ENCODE measurements at regions of chr2 and their contacts with region 1.

Region 1: GRCh38 chr2:70258532-70258874 is 566 bp downstream of the PCYOX1 start:
- DNase-seq: no peak
- ATAC-seq: no peak
- H3K4me3 Mint-ChIP-seq: peak overlapping the region; percentile 95
- H3K27ac Mint-ChIP-seq: peak overlapping the region; percentile 92
- H3K4me1 Mint-ChIP-seq: peaks cover 28% of the 10 kb centered on the region
- H3K27me3 Mint-ChIP-seq: peaks cover 4% of the 10 kb centered on the region

Region 2: DNA sequence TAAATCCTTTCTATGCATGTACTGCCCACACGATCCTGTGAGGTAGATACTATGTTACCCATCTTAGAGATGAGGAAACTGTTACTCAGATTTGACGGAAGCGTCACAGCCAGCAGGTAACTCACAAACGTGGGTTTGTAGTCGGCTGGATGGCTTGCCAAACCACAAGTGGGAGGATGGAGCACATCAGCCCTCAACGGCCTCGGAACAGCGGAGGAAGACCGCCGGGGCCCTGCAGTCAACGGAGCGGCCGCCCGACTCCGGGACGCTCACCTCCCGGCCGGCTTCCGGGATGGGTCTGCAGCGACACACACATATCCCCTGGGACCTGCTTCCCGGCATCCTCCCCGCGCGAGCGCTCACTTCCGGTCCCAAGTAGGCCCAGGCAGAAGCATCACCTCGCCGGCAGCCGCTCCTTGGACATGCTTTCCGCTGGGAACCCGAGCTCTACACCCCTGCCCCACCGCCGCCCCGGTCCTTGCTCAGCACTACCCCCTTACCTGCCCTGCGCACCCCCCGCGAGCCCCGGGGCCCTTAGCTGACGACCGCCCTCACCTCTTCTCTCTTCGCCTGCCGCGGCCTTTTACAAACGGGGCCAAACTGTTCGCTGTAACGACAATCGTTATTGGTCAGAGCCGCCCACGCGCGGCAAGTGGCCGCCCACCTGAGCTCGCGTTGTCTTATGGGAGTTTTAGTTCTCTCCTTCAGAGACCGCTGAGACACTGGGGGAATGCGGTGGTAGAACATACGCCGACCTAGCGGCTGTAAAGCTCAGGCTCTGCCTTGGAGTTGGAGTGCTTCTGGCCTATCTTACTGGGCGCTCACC is 67.9 kb before region 1 on chr2 and contains the start of gene C2orf42:
- POLR2A ChIA-PET with region 1: interaction called, 16 read pairs
- DNase-seq: peak; percentile 93
- ATAC-seq: peak; percentile 85
- H3K4me3 Mint-ChIP-seq: peak within 1 kb of the TSS; percentile 95
- H3K27ac Mint-ChIP-seq: peak within 1 kb of the TSS; percentile 99
- H3K4me1 Mint-ChIP-seq: peaks cover 14% of the 10 kb centered on the region
- H3K27me3 Mint-ChIP-seq: peaks cover 2% of the 10 kb centered on the region
- total RNA-seq, gene C2orf42: 30.9 to 33.8 TPM

Region 3: GRCh38 chr2:70248181-70248847 is 10.2 kb before region 1 on chr2 and contains the start of gene TIA1:
- POLR2A ChIA-PET with region 1: interaction called, 20 read pairs
- DNase-seq: peak; percentile 97
- ATAC-seq: peak; percentile 99
- H3K4me3 Mint-ChIP-seq: peak within 1 kb of the TSS; percentile 99
- H3K27ac Mint-ChIP-seq: peak within 1 kb of the TSS; percentile 99
- H3K4me1 Mint-ChIP-seq: peaks cover 21% of the 10 kb centered on the region
- H3K27me3 Mint-ChIP-seq: no peaks in the 10 kb centered on the region
- total RNA-seq, gene TIA1: 160 TPM

Region 4: DNA sequence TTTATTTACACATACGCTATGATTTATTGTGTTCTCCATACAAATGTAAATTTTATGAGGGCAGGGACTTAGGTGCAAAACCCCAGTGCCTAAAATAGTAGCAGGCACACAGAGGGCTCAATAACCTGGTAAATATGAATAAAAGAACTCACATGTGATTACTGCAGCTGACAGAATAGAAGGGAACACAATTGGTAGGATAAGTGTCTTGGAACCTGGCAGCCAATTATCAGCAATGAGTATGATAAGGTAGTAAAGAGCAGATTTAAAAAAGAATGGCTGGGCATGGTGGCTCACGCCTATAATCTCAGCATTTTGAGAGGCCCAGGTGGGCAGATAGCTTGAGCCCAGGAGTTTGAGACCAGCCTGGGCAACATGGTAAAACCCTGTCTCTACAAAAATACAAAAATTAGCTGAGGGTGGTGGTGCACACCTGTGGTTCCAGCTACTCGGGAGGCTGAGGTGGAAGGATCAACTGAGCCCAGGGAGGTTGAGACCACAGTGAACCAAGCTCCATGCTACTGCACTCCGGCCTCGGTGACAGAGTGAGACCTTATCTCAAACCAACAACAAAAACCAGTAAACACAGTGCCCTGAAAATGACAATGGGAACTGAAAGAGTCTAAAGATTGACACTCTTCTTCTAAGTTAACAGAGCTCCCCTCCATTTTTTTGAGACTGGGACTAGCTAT is 25.1 kb after region 1 on chr2:
- POLR2A ChIA-PET with region 1: interaction called, 11 read pairs
- DNase-seq: no peak
- ATAC-seq: no peak
- H3K4me3 Mint-ChIP-seq: no peak overlapping the region
- H3K27ac Mint-ChIP-seq: peak overlapping the region; percentile 57
- H3K4me1 Mint-ChIP-seq: peaks cover 18% of the 10 kb centered on the region
- H3K27me3 Mint-ChIP-seq: no peaks in the 10 kb centered on the region

Region 5: GRCh38 chr2:70301344-70302194 is 43.1 kb after region 1 on chr2 and contains the start of gene FAM136A:
- POLR2A ChIA-PET with region 1: interaction called, 13 read pairs
- DNase-seq: peak; percentile 95
- ATAC-seq: peak; percentile 88
- H3K4me3 Mint-ChIP-seq: peak within 1 kb of the TSS; percentile 87
- H3K27ac Mint-ChIP-seq: peak within 1 kb of the TSS; percentile 94
- H3K4me1 Mint-ChIP-seq: peaks cover 23% of the 10 kb centered on the region
- H3K27me3 Mint-ChIP-seq: no peaks in the 10 kb centered on the region
- total RNA-seq, gene FAM136A: 34.8 to 36.3 TPM